Calu3 (cell line): ENCODE measurements at regions of chr6 and their contacts with region 1.

Region 1: DNA sequence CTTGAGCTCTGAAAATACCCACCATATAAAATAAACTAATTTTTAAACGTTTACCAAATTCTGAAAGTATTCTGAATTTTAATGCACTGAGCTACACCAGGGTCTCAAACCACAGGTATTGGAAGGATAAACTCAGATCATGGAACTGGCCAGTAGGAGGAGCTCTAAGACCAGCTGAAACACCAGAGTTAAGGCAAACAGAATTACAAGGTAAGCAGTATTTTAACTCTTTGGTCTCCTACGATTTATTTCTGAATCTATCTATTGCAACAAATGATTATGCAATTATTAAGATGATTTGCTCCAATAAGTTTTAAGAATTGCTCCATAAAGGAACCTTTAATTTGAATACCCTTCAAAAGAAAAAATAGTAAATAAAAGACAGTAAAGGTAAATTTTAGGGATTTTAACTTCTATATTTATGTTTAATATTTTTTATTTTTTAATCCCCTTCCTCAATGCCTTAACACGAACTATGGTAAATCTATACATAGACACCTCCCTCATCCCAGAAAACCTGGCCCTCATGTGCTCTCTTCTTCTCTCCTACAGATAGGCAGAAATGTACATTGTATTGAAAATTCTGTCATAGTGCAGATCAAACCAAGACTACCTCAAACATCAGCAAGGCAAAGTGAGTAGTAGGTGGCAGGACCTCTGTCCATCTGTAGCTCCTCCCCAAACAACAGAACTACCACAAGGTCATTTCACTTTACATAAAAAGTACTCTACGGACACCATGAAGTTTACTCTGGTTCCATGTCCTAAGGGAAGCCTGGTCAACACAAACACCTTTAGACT is 58.4 kb downstream of the SMLR1 start:
- DNase-seq: peak; percentile 83
- H3K4me3 Mint-ChIP-seq: no peak overlapping the region
- H3K27ac Mint-ChIP-seq: no peak overlapping the region
- H3K4me1 Mint-ChIP-seq: peaks cover 9% of the 10 kb centered on the region
- H3K27me3 Mint-ChIP-seq: no peaks in the 10 kb centered on the region
- CTCF ChIP-seq: peak; percentile 79

Region 2: GRCh38 chr6:130575971-130576370 is 309.6 kb before region 1 on chr6:
- CTCF ChIA-PET with region 1: no interaction called
- intact Hi-C with region 1: no loop called
- DNase-seq: no peak
- H3K4me3 Mint-ChIP-seq: no peak overlapping the region
- H3K27ac Mint-ChIP-seq: no peak overlapping the region
- H3K4me1 Mint-ChIP-seq: no peaks in the 10 kb centered on the region
- H3K27me3 Mint-ChIP-seq: peaks cover 31% of the 10 kb centered on the region
- CTCF ChIP-seq: no peak

Region 3: DNA sequence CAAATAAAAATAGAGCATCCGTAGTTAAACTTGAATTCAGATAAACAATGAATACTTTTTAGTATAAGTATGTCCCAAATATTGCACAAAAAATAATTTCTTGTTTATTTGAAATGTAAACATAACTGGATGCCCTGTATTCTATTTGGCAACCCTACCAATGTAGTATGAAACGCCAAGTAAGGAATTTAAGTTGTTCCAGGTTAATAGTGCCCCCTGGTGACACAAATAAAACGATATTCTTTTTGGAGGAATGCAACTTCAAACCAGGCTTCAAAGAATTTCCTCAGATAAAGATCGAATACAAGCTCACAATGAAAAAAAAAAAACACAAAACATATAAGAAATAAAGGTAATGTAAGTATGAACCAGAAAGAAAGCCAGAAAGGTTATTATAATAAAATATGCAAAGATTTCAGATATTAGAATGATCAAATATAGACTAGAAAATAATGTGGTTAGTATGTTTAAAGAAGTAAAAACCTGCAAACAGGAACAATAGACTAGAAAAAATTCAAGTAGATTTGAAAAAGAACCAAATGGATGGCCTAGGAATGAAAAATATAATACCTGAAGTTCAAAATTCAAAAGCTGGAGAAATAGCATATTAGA is 231.3 kb after region 1 on chr6:
- CTCF ChIA-PET with region 1: interaction called, 50 read pairs
- intact Hi-C with region 1: loop called (anchors 1 kb)
- DNase-seq: peak; percentile 58
- H3K4me3 Mint-ChIP-seq: no peak overlapping the region
- H3K27ac Mint-ChIP-seq: no peak overlapping the region
- H3K4me1 Mint-ChIP-seq: peaks cover 27% of the 10 kb centered on the region
- H3K27me3 Mint-ChIP-seq: no peaks in the 10 kb centered on the region
- CTCF ChIP-seq: peak; percentile 40

Region 4: DNA sequence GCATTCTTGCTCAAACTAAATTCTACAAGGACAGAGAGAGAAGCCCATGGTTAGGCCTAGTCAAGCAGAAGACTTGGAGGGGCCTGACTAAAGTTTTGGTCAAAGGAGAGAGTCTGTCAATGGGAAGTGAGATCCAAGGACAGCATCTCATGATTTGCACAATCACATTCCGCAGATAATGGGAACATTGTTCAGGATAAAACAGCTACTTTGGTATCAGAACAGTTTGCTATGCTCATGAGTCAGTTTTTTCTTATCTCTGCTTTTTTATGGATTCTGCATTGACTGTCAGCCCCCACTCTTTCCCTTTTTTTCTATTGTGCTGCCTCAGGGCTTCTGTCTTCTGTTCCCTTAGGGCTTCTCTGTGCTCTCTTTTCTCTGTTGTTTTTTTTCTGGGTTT is 278.3 kb after region 1 on chr6:
- CTCF ChIA-PET with region 1: no interaction called
- intact Hi-C with region 1: loop called (anchors 2 kb)
- DNase-seq: no peak
- H3K4me3 Mint-ChIP-seq: no peak overlapping the region
- H3K27ac Mint-ChIP-seq: no peak overlapping the region
- H3K4me1 Mint-ChIP-seq: peaks cover 8% of the 10 kb centered on the region
- H3K27me3 Mint-ChIP-seq: no peaks in the 10 kb centered on the region
- CTCF ChIP-seq: no peak

Region 5: GRCh38 chr6:131443514-131443913 is 557.9 kb after region 1 on chr6:
- CTCF ChIA-PET with region 1: no interaction called
- intact Hi-C with region 1: no loop called
- DNase-seq: no peak
- H3K4me3 Mint-ChIP-seq: no peak overlapping the region
- H3K27ac Mint-ChIP-seq: no peak overlapping the region
- H3K4me1 Mint-ChIP-seq: no peaks in the 10 kb centered on the region
- H3K27me3 Mint-ChIP-seq: no peaks in the 10 kb centered on the region
- CTCF ChIP-seq: no peak